ENCODE measurements at regions of chr3 and their contacts with region 1.

Region 1: DNA sequence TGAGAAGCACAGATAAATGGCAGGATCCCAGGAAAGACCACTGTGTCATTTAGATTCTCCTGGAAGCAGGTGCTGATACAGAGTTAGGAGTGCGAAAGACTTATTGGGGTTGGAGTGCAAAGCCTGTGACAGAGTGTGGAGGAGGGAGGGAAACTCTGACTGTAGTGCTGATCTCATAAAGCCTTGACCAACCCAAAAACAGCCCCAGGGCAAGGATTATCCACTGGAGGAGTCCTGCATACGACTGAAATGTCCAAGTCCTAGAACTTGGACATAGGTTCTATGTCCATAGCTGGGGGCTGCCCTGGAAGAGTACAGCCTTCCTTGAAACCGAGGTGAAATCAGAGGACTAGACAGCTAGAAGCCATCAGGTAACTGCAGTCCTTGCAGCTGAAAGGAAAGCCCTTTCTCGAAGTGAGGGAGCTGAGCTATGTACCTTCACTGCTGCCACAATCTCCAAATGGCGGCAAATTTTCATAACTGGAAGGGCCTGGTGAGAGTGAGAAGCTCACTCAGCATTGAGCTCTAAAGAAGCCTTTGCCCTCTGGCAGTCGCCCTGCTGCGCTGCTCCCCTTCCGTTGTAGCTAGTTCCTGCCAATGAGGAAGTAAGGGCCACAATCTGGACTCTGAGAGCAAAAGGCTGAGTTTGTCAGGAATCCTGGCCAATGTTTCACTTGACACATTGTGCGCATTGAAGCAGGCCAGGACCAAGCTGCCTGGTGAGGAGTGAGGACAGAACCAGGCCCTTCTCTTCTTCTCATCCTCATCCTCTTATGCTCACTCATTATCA is 579.3 kb downstream of the PDCD6IP start:
- DNase-seq: no peak
- ATAC-seq: no peak
- H3K4me3 Mint-ChIP-seq: no peak overlapping the region
- H3K27ac Mint-ChIP-seq: no peak overlapping the region
- H3K4me1 Mint-ChIP-seq: no peaks in the 10 kb centered on the region
- H3K27me3 Mint-ChIP-seq: no peaks in the 10 kb centered on the region
- CTCF ChIP-seq: no peak

Region 2: GRCh38 chr3:34239875-34240274 is 137.9 kb before region 1 on chr3:
- CTCF ChIA-PET with region 1: no interaction called
- POLR2A ChIA-PET with region 1: interaction called, 11 read pairs
- DNase-seq: no peak
- ATAC-seq: no peak
- H3K4me3 Mint-ChIP-seq: no peak overlapping the region
- H3K27ac Mint-ChIP-seq: no peak overlapping the region
- H3K4me1 Mint-ChIP-seq: no peaks in the 10 kb centered on the region
- H3K27me3 Mint-ChIP-seq: no peaks in the 10 kb centered on the region
- CTCF ChIP-seq: no peak

Measured in WTC11 (cell line).